A549 (cell line): ENCODE measurements at regions of chr1 and their contacts with region 1.

Region 1: GRCh38 chr1:45569962-45570581 is 13.8 kb upstream of the NASP start:
- DNase-seq: peak; percentile 35 to 74
- ATAC-seq: peak; percentile 88 to 94
- H3K4me3 ChIP-seq: no peak overlapping the region
- H3K27ac ChIP-seq: no peak overlapping the region
- H3K4me1 ChIP-seq: no peaks in the 10 kb centered on the region
- CTCF ChIP-seq: peak; percentile 86
- EP300 ChIP-seq: no peak
- POLR2A ChIP-seq: no peak
- RAD21 ChIP-seq: peak; percentile 85 to 92

Region 2: GRCh38 chr1:45011837-45012638 is 558.0 kb before region 1 on chr1 and contains the start of gene UROD:
- CTCF ChIA-PET with region 1: interaction called, 10 read pairs
- POLR2A ChIA-PET with region 1: no interaction called
- DNase-seq: peak; percentile 92 to 94
- ATAC-seq: peak; percentile 60 to 85
- H3K4me3 ChIP-seq: peak within 1 kb of the TSS; percentile 97
- H3K27ac ChIP-seq: peak within 1 kb of the TSS; percentile 67 to 93
- H3K4me1 ChIP-seq: peaks cover 8% of the 10 kb centered on the region; the same call in 2 of the 3 replicates
- CTCF ChIP-seq: no peak
- EP300 ChIP-seq: no peak
- POLR2A ChIP-seq: peak; percentile 42
- RAD21 ChIP-seq: no peak
- polyA plus RNA-seq, gene UROD: 59.0 and 74.5 TPM in 2 replicates

Region 3: GRCh38 chr1:45455162-45455561 is 114.9 kb before region 1 on chr1:
- CTCF ChIA-PET with region 1: no interaction called
- POLR2A ChIA-PET with region 1: no interaction called
- DNase-seq: no peak
- ATAC-seq: no peak
- H3K4me3 ChIP-seq: no peak overlapping the region
- H3K27ac ChIP-seq: no peak overlapping the region
- H3K4me1 ChIP-seq: no peaks in the 10 kb centered on the region
- CTCF ChIP-seq: no peak
- EP300 ChIP-seq: no peak
- POLR2A ChIP-seq: no peak
- RAD21 ChIP-seq: no peak

Region 4: GRCh38 chr1:45499415-45499769 is 70.7 kb before region 1 on chr1:
- CTCF ChIA-PET with region 1: interaction called, 35 read pairs
- POLR2A ChIA-PET with region 1: no interaction called
- DNase-seq: no peak
- ATAC-seq: peak in 1 of 2 experiments; percentile 16; a peak in 2 of 6 replicates
- H3K4me3 ChIP-seq: peak overlapping the region; percentile 75
- H3K27ac ChIP-seq: peak overlapping the region; percentile 82 to 83
- H3K4me1 ChIP-seq: peaks cover 25% of the 10 kb centered on the region
- CTCF ChIP-seq: no peak
- EP300 ChIP-seq: no peak
- POLR2A ChIP-seq: no peak
- RAD21 ChIP-seq: no peak

Region 5: GRCh38 chr1:45521398-45522323 is 48.4 kb before region 1 on chr1 and contains the start of gene PRDX1:
- CTCF ChIA-PET with region 1: interaction called, 29 read pairs
- POLR2A ChIA-PET with region 1: interaction called, 29 read pairs
- DNase-seq: peak; percentile 72 to 95
- ATAC-seq: peak; percentile 84 to 86
- H3K4me3 ChIP-seq: peak within 1 kb of the TSS; percentile 76
- H3K27ac ChIP-seq: peak within 1 kb of the TSS; percentile 100
- H3K4me1 ChIP-seq: peaks cover 62% of the 10 kb centered on the region
- CTCF ChIP-seq: no peak
- EP300 ChIP-seq: 0 out of 5 replicates have a peak, but pooled peaks of 1 of the 2 experiments have one; percentile 17
- POLR2A ChIP-seq: peak; percentile 99
- RAD21 ChIP-seq: no peak
- polyA plus RNA-seq, gene PRDX1: 2,329 and 2,391 TPM in 2 replicates

Region 6: GRCh38 chr1:45550401-45551351 is 19.4 kb before region 1 on chr1 and contains the start of gene AKR1A1:
- CTCF ChIA-PET with region 1: interaction called, 16 read pairs
- POLR2A ChIA-PET with region 1: no interaction called
- DNase-seq: peak; percentile 71 to 87
- ATAC-seq: peak; percentile 97 to 99
- H3K4me3 ChIP-seq: peak within 1 kb of the TSS; percentile 72
- H3K27ac ChIP-seq: peak within 1 kb of the TSS; percentile 91 to 98
- H3K4me1 ChIP-seq: peaks cover 22% of the 10 kb centered on the region
- CTCF ChIP-seq: no peak
- EP300 ChIP-seq: no peak
- POLR2A ChIP-seq: peak; percentile 59
- RAD21 ChIP-seq: no peak; a peak in 1 of 5 replicates
- polyA plus RNA-seq, gene AKR1A1: 110 and 139 TPM in 2 replicates

Region 7: DNA sequence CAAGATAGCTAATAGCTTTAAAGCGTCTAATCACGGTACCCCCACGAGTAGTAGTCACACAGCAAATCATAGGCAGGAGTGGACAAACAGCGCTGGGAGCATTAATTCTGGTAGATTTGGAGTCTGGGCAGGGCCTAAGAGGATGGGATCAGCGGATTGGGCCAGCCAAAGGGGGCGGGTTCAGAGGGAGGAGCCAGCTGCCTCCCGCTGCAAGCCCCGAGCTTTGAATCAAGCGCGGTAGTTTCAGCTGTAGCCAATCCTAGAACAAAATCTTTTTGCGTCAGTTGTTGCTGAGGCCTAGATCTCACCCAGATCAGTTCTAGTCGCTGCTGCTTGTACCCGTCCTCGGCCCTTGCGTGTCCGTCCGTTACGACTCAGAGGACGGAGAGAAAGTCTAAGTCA is 13.2 kb after region 1 on chr1:
- CTCF ChIA-PET with region 1: interaction called, 32 read pairs
- POLR2A ChIA-PET with region 1: no interaction called
- DNase-seq: peak; percentile 94 to 97
- ATAC-seq: peak; percentile 90 to 91
- H3K4me3 ChIP-seq: peak overlapping the region; percentile 89
- H3K27ac ChIP-seq: peak overlapping the region; percentile 91 to 98
- H3K4me1 ChIP-seq: peaks cover 13% of the 10 kb centered on the region; the same call in 2 of the 3 replicates
- CTCF ChIP-seq: no peak
- EP300 ChIP-seq: no peak
- POLR2A ChIP-seq: no peak
- RAD21 ChIP-seq: no peak